AG04449 (cell line): ENCODE measurements at regions of chr7 and their contacts with region 1.

Region 1: DNA sequence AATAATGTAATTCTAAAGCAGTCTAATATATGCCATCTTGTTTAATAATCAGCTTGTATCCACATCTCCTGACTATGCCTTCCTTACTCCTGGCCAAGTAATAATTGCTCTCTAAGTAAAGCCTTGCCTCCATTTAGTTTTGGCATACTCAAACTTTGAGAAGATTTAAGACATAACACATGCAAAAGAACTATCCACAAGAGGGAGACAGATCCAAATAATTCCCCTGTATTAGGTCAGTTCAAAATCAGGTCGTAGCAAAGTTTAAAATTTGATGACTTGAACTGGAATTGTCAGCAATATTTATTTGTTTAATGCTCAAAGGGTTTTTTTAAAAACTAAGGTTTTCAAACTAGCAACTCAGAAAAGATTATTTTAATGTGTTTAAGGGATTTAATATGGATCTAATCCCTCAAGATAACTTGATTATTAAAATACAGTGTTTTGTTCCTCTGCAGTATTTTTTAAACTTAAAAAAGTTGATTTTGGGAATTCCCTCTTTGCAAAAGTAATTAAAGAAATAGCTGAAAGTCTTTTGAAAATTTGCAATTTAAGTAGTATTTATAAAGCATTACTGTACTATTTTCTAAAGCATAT is 95.3 kb downstream of the HDAC9 start:
- DNase-seq: peak; percentile 19
- H3K4me3 ChIP-seq: no peak overlapping the region
- CTCF ChIP-seq: peak; percentile 49

Region 2: GRCh38 chr7:18357691-18358090 is 233.2 kb before region 1 on chr7:
- CTCF ChIA-PET with region 1: interaction called, 96 read pairs
- POLR2A ChIA-PET with region 1: interaction called, 3 read pairs
- DNase-seq: no peak
- H3K4me3 ChIP-seq: no peak overlapping the region
- CTCF ChIP-seq: peak; percentile 5

Region 3: GRCh38 chr7:18607025-18607424 is 16.2 kb after region 1 on chr7:
- CTCF ChIA-PET with region 1: interaction called, 15 read pairs
- POLR2A ChIA-PET with region 1: no interaction called
- DNase-seq: no peak
- H3K4me3 ChIP-seq: no peak overlapping the region
- CTCF ChIP-seq: no peak

Region 4: DNA sequence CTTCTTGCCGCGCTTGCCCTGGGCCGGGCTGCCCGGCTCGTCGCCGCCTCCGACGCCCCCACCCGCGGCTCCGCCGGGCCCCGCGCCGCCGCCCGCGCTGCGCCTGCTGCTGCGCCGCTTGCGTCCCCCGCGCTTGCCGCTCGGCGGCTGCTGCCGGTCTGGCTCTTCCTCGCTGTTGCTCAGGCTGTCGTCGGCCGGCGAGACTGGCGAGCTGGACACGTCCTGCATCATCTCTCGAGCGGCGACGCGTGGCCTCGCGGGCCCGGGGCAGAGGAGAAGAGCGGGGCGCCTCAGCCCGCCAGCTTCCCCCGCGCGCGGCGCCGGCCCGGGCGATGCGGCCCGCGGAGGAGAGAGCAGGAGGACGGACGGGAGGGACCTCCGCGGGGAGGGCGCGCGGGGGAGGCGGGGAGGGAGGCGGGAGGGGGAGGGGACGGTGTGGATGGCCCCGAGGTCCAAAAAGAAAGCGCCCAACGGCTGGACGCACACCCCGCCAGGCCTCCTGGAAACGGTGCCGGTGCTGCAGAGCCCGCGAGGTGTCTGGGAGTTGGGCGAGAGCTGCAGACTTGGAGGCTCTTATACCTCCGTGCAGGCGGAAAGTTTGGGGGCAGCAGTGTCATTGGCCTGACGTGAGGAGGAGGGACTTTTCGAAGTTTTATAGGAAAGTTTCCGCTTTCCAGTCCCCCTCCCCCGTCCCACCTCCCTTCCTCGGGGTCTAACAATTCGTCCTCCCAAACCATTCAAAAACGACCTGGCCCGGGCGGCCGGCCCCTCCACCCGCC is 526.4 kb after region 1 on chr7 and contains the start of gene TWIST1:
- CTCF ChIA-PET with region 1: interaction called, 16 read pairs
- POLR2A ChIA-PET with region 1: no interaction called
- DNase-seq: peak; percentile 95
- H3K4me3 ChIP-seq: peak within 1 kb of the TSS; percentile 99
- CTCF ChIP-seq: no peak

Region 5: GRCh38 chr7:19665399-19666008 is 1074.7 kb after region 1 on chr7:
- CTCF ChIA-PET with region 1: interaction called, 19 read pairs
- POLR2A ChIA-PET with region 1: no interaction called
- DNase-seq: no peak
- H3K4me3 ChIP-seq: no peak overlapping the region
- CTCF ChIP-seq: peak; percentile 3